ENCODE measurements at regions of chr19 and their contacts with region 1.

Region 1: GRCh38 chr19:16398504-16399249 is 73.1 kb downstream of the EPS15L1 start:
- DNase-seq: no peak
- H3K4me3 ChIP-seq: no peak overlapping the region
- H3K27ac ChIP-seq: no peak overlapping the region
- H3K27me3 ChIP-seq: no peaks in the 10 kb centered on the region
- CTCF ChIP-seq: no peak

Region 2: DNA sequence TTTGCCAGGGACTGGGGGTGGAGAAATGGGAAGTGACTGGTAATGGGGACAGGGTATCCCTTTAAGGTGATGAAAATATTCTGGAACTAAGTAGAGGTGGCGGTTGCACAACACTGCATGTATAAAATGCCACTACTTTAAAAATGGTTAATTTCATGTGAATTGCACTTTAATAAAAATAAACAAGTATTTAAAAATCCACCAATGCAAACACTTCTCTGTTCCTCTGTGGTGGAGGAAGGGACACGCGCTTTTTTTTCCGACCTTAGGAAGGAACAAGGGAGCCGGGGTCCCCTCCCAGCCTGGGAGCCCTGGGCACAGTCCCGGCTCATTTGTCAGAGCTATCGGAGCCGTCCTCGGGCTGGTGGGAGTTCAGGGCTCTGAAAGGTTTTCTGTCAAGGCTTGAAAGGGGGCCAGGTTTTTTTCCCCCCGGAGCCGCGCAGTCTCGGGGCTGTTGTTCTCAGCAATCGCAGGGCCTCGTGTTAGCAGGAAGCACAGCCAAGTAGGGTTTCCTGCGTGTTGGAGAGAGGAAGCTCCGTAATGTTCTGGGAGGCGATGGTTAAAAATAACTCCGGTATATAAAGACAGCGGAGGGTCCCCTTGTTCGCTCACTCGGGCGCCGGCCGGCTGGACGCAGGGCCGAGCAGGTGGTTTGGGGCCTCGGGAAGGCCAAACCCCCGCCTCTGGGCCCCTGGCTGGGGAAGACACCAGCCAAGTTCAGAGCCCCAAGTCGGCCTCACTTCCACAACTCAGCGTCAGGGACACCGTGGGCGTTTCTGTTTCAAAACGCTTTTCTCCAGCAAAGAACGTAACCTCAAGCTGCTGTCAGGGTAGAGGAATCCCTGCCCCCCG is 115.2 kb before region 1 on chr19:
- CTCF ChIA-PET with region 1: interaction called, 6 read pairs
- POLR2A ChIA-PET with region 1: interaction called, 12 read pairs
- DNase-seq: peak; percentile 16
- H3K4me3 ChIP-seq: peak overlapping the region; percentile 20; the same call in 1 of the 2 replicates
- H3K27ac ChIP-seq: peak overlapping the region; percentile 84
- H3K27me3 ChIP-seq: peaks cover 4% of the 10 kb centered on the region
- CTCF ChIP-seq: no peak

Region 3: DNA sequence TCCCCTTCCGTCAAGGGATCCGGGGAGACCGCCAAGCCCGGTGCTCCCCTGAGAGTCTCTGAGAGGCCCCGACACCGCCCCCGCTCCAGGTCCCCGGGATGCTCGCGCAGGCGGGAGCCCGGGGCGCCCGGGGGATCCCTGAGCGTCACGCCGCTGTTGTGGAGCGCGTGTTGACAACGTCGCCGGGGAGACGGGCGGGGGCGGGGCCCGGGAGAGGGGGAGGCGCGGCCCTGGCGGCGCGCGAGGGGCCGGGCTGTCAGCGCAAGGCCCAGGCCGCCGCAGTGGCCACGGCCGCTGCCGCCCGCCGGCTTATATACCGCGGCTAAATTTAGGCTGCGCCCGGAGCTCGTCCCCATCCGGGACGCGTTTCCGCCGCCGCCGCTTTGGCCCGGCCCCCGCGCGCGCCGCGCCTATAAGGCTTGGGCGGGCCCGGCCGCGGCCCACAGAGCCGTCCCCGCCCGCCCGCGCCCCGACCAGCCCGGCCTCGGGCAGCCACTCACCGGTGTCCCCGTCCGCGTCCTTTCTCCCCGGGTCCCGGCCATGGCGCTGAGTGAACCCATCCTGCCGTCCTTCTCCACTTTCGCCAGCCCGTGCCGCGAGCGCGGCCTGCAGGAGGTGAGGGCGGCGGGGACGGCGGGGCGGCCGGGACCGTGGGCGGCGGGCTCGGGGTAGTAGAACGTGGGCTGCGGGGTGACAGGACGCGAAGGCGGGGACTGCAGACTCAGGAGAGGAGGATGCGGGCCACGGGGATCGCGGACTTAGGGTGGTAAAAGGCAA is 74.1 kb before region 1 on chr19 and contains the start of gene KLF2:
- CTCF ChIA-PET with region 1: no interaction called
- POLR2A ChIA-PET with region 1: interaction called, 12 read pairs
- DNase-seq: peak; percentile 67
- H3K4me3 ChIP-seq: peak within 1 kb of the TSS; percentile 72
- H3K27ac ChIP-seq: peak within 1 kb of the TSS; percentile 87
- H3K27me3 ChIP-seq: no peaks in the 10 kb centered on the region
- CTCF ChIP-seq: no peak
- polyA plus RNA-seq, gene KLF2: 0.60 and 1.5 TPM in 2 replicates

Measured in AG04450 (cell line).